CD8-positive, alpha-beta memory T cell (primary cell): ENCODE measurements at regions of chr17 and their contacts with region 1.

Region 1: GRCh38 chr17:58317421-58318064 is 11.1 kb downstream of the TSPOAP1 start:
- DNase-seq: peak; percentile 49 to 86 (median 76)
- H3K4me3 ChIP-seq: no peak overlapping the region
- H3K4me3 Mint-ChIP-seq: peak overlapping the region; percentile 1 to 68 (median 55)
- H3K27ac ChIP-seq: no peak overlapping the region
- H3K27ac Mint-ChIP-seq: peak overlapping the region; percentile 79 to 98 (median 94)
- H3K4me1 ChIP-seq: peaks cover 13% of the 10 kb centered on the region
- H3K4me1 Mint-ChIP-seq: peaks cover 16 to 23% (median 18%) of the 10 kb centered on the region in 3 donors
- H3K27me3 ChIP-seq: no peaks in the 10 kb centered on the region
- H3K27me3 Mint-ChIP-seq: no peaks in the 10 kb centered on the region

Region 2: GRCh38 chr17:58303971-58304725 is 13.4 kb before region 1 on chr17:
- CTCF ChIA-PET with region 1: interaction called, 16 read pairs
- POLR2A ChIA-PET with region 1: no interaction called
- DNase-seq: peak; percentile 34 to 70 (median 52)
- H3K4me3 ChIP-seq: no peak overlapping the region
- H3K4me3 Mint-ChIP-seq: peak overlapping the region in 1 of 7 donors; percentile 72
- H3K27ac ChIP-seq: no peak overlapping the region
- H3K27ac Mint-ChIP-seq: peak overlapping the region in 5 of 8 donors; percentile 2 to 70 (median 42)
- H3K4me1 ChIP-seq: no peaks in the 10 kb centered on the region
- H3K4me1 Mint-ChIP-seq: peaks cover 5 to 13% (median 6%) of the 10 kb centered on the region in 3 donors
- H3K27me3 ChIP-seq: no peaks in the 10 kb centered on the region
- H3K27me3 Mint-ChIP-seq: no peaks in the 10 kb centered on the region

Region 3: DNA sequence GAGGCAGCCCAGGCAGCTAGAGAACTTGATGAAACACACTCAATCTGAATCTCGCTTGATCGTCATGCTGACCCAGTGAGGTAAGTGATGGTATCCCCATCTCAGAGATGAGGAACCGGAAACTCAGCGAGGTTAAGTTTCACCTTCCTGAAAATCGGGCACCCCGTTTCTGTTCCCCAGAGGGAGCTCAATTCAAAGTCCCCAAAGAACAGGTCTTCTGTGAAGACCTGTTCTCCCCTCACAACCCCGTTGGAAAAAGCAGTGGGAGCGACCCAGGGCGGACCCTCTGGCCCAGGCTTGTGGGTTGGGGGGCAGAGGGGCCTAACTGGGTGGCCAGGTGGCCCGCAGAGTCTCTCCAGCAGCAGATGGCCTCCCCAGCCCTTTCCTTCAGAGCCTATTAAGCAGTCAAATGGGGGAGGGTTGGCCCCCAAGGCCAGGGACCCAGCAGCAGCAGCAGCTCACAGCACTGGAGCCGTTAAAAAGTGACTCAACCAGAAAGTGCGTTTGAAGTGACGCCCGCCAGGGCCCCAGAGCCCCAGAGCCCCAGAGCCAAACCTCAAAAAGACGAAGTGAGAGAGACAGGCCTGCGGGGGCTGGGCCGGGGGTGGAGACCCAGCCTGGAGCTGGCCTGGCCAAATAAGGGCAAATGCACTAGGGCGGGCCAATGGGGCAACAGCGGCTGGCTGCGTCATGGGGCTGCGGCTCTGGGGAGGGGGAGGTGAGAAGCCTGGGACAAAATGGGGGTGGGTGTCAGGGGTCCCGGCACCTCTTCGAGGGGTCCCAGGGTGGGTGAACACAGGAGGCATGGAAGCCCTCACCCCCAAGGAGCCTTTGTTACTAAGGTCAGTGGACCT is 20.3 kb after region 1 on chr17:
- CTCF ChIA-PET with region 1: interaction called, 504 read pairs
- POLR2A ChIA-PET with region 1: interaction called, 72 read pairs
- DNase-seq: peak; percentile 83 to 95 (median 91)
- H3K4me3 ChIP-seq: peak overlapping the region; percentile 98
- H3K4me3 Mint-ChIP-seq: peak overlapping the region; percentile 89 to 100 (median 95)
- H3K27ac ChIP-seq: peak overlapping the region; percentile 96
- H3K27ac Mint-ChIP-seq: peak overlapping the region; percentile 93 to 100 (median 98)
- H3K4me1 ChIP-seq: peaks cover 85% of the 10 kb centered on the region
- H3K4me1 Mint-ChIP-seq: peaks cover 79 to 92% (median 87%) of the 10 kb centered on the region in 3 donors
- H3K27me3 ChIP-seq: no peaks in the 10 kb centered on the region
- H3K27me3 Mint-ChIP-seq: peaks cover 0 to 2% of the 10 kb centered on the region in 2 donors

Region 4: DNA sequence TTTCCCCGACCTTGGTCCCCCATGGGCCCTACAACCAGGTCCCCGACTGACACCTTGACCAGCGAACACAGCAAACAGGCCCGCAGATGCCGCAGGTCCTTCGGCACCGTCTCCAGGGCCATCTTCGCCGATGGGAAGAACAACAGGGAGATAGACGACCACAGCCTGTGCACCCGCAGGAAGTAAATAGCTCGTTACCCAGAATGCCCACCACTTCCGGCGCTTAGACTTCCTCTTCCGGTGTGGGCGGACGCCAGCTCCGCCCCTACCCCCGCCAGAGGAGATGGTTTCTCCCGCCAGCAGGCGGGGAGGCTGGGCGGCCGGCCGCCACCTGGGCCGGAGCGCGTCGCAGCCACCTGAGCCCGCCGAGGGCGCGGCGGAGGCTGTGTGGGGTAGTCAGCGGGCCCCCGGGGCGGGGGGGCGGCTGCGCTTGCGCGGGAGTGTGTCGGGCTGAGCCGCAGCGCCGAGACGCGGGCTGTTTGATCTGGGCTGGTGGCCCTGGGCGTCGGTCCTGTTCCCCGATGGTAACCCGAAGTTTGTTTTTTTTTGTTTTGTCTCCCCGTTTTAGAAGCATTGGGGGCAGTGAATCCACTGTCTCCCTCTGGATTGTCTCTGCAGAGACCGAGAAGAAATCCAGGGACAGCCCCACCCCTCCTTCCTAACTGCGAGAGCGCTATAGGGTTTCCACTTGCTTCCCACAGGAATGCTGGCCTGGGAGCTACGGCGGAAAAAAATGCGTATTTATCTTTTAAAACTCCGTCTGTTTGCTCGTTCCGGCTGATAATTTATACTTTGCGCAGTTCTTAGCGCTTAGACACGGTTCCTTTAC is 34.7 kb after region 1 on chr17 and contains the start of gene SUPT4H1:
- CTCF ChIA-PET with region 1: interaction called, 504 read pairs
- POLR2A ChIA-PET with region 1: interaction called, 39 read pairs
- DNase-seq: peak; percentile 84 to 95 (median 90)
- H3K4me3 ChIP-seq: peak within 1 kb of the TSS; percentile 98
- H3K4me3 Mint-ChIP-seq: peak within 1 kb of the TSS; percentile 95 to 100 (median 99)
- H3K27ac ChIP-seq: peak within 1 kb of the TSS; percentile 93
- H3K27ac Mint-ChIP-seq: peak within 1 kb of the TSS; percentile 95 to 100 (median 98)
- H3K4me1 ChIP-seq: peaks cover 38% of the 10 kb centered on the region
- H3K4me1 Mint-ChIP-seq: peaks cover 40 to 66% (median 61%) of the 10 kb centered on the region in 3 donors
- H3K27me3 ChIP-seq: no peaks in the 10 kb centered on the region
- H3K27me3 Mint-ChIP-seq: no peaks in the 10 kb centered on the region
- total RNA-seq, gene SUPT4H1: 145 to 149 TPM

Region 5: GRCh38 chr17:58417300-58418092 is 100.0 kb after region 1 on chr17 and contains the start of gene RNF43:
- CTCF ChIA-PET with region 1: interaction called, 98 read pairs
- POLR2A ChIA-PET with region 1: interaction called, 15 read pairs
- DNase-seq: peak; percentile 72 to 93 (median 85)
- H3K4me3 ChIP-seq: peak within 1 kb of the TSS; percentile 15
- H3K4me3 Mint-ChIP-seq: peak within 1 kb of the TSS in 5 of 7 donors; percentile 0 to 37 (median 2)
- H3K27ac ChIP-seq: peak within 1 kb of the TSS; percentile 28
- H3K27ac Mint-ChIP-seq: peak within 1 kb of the TSS; percentile 0 to 88 (median 55)
- H3K4me1 ChIP-seq: peaks cover 15% of the 10 kb centered on the region
- H3K4me1 Mint-ChIP-seq: peaks cover 9 to 19% (median 14%) of the 10 kb centered on the region in 3 donors
- H3K27me3 ChIP-seq: no peaks in the 10 kb centered on the region
- H3K27me3 Mint-ChIP-seq: no peaks in the 10 kb centered on the region
- total RNA-seq, gene RNF43: 0.47 to 1.2 TPM

Region 6: DNA sequence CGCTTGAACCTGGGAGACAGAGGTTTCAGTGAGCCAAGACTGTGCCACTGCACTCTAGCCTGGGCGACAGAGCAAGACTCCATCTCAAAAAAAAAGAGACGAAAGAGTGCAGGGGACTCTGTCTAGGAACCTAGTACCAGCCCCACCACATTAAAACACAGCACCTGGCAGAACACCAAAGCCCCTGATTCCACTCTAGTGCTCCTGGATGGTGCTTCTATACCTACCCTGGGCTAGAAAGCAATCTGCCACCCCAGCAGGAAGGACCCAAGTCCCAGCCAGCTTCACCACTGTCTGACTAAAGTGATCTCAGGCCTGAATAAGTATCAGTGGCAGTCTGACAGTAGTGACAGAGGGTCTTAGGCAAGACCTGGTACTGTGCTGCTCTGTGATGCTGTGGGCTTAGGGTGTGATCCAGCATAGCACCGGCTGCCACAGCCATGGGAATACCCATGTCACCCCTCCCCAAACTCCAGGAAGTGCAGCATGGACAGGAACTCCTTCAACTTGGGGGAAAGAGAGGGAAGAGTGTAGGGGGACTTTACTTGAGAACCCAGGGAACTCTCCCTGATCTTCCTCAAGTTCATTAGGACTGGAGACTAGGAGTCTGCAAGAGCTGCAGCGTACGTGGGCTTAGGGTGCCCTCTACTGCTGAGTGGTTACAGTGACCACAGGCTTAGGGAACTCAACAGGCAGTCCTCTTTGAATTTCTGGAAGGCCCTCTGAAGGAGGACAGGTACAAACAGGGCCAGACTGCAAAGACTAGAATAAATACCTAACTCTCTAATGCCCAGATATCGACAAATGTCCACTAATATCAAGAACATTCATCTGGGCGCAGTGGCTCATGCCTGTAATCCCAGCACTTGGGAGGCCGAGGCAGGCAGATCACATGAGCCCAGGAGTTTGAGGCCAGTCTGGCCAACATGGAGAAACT is 129.8 kb after region 1 on chr17:
- CTCF ChIA-PET with region 1: interaction called, 23 read pairs
- POLR2A ChIA-PET with region 1: no interaction called
- DNase-seq: peak; percentile 39 to 75 (median 42)
- H3K4me3 ChIP-seq: no peak overlapping the region
- H3K4me3 Mint-ChIP-seq: no peak overlapping the region
- H3K27ac ChIP-seq: no peak overlapping the region
- H3K27ac Mint-ChIP-seq: no peak overlapping the region
- H3K4me1 ChIP-seq: no peaks in the 10 kb centered on the region
- H3K4me1 Mint-ChIP-seq: no peaks in the 10 kb centered on the region
- H3K27me3 ChIP-seq: no peaks in the 10 kb centered on the region
- H3K27me3 Mint-ChIP-seq: no peaks in the 10 kb centered on the region